Stomach (tissue), 19 donors: ENCODE measurements at regions of chr6 and their contacts with region 1.

Region 1: GRCh38 chr6:131199568-131200272 is 64.5 kb downstream of the AKAP7 start:
- DNase-seq: peak; percentile 34 to 90
- H3K4me3 ChIP-seq: no peak overlapping the region
- H3K27ac ChIP-seq: peak overlapping the region; percentile 5 to 62 (median 48)
- H3K4me1 ChIP-seq: no peaks in the 10 kb centered on the region
- H3K27me3 ChIP-seq: no peaks in the 10 kb centered on the region
- CTCF ChIP-seq: peak in 5 of 7 experiments; percentile 34 to 80 (median 50)
- EP300 ChIP-seq: no peak
- POLR2A ChIP-seq: no peak

Region 2: GRCh38 chr6:130937942-130938604 is 261.6 kb before region 1 on chr6:
- intact Hi-C with region 1: no loop called
- DNase-seq: no peak
- H3K4me3 ChIP-seq: no peak overlapping the region
- H3K27ac ChIP-seq: no peak overlapping the region
- H3K4me1 ChIP-seq: peaks cover 7 to 31% (median 19%) of the 10 kb centered on the region in 4 donors
- H3K27me3 ChIP-seq: no peaks in the 10 kb centered on the region
- CTCF ChIP-seq: no peak
- EP300 ChIP-seq: no peak
- POLR2A ChIP-seq: no peak

Region 3: DNA sequence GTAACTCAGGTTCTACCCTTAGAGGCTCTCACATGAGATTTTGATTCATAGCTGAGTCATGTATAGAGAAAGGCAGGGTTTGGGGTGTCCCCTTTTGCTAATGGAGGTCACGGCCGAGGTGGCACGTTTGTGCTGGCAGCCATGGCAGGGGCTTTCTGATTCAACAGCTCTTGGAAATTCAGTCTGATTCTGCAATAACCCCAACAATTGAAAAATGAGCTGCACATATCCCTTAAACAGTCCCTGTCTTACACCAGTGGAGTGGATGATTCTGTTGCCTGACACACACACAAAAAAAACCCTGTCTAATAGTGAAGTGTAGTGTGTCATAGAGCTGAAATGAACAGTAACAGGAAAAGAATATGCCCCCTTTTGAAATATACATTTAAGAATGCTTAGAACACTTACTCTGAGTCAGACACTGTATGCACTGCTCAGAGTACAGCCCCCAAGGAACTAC is 332.9 kb after region 1 on chr6:
- intact Hi-C with region 1: loop called (anchors 5 kb)
- DNase-seq: no peak
- H3K4me3 ChIP-seq: no peak overlapping the region
- H3K27ac ChIP-seq: no peak overlapping the region
- H3K4me1 ChIP-seq: no peaks in the 10 kb centered on the region
- H3K27me3 ChIP-seq: no peaks in the 10 kb centered on the region
- CTCF ChIP-seq: no peak
- EP300 ChIP-seq: no peak
- POLR2A ChIP-seq: no peak